ENCODE measurements at regions of chr9 and their contacts with region 1.

Region 1: GRCh38 chr9:12775679-12776512 is 1.1 kb downstream of the LURAP1L start:
- H3K4me3 ChIP-seq: peak overlapping the region; percentile 71
- H3K27ac ChIP-seq: peak overlapping the region; percentile 87
- H3K4me1 ChIP-seq: peaks cover 8% of the 10 kb centered on the region
- CTCF ChIP-seq: peak; percentile 89

Region 2: GRCh38 chr9:12719431-12719830 is 56.5 kb before region 1 on chr9:
- CTCF ChIA-PET with region 1: interaction called, 18 read pairs
- POLR2A ChIA-PET with region 1: interaction called, 3 read pairs
- H3K4me3 ChIP-seq: no peak overlapping the region
- H3K27ac ChIP-seq: no peak overlapping the region
- H3K4me1 ChIP-seq: no peaks in the 10 kb centered on the region
- CTCF ChIP-seq: no peak

Region 3: GRCh38 chr9:12760758-12761157 is 15.1 kb before region 1 on chr9:
- CTCF ChIA-PET with region 1: interaction called, 11 read pairs
- POLR2A ChIA-PET with region 1: no interaction called
- H3K4me3 ChIP-seq: no peak overlapping the region
- H3K27ac ChIP-seq: no peak overlapping the region
- H3K4me1 ChIP-seq: peaks cover 8% of the 10 kb centered on the region; the same call in 1 of the 2 replicates
- CTCF ChIP-seq: no peak

Region 4: GRCh38 chr9:12813960-12814876 is 38.3 kb after region 1 on chr9:
- CTCF ChIA-PET with region 1: interaction called, 8 read pairs
- POLR2A ChIA-PET with region 1: interaction called, 15 read pairs
- H3K4me3 ChIP-seq: peak overlapping the region; percentile 15
- H3K27ac ChIP-seq: peak overlapping the region; percentile 79
- H3K4me1 ChIP-seq: peaks cover 11% of the 10 kb centered on the region
- CTCF ChIP-seq: 0 out of 2 replicates have a peak, but pooled peaks have one; percentile 15

Region 5: GRCh38 chr9:12884737-12885414 is 109.0 kb after region 1 on chr9:
- CTCF ChIA-PET with region 1: interaction called, 20 read pairs
- POLR2A ChIA-PET with region 1: interaction called, 4 read pairs
- H3K4me3 ChIP-seq: no peak overlapping the region
- H3K27ac ChIP-seq: no peak overlapping the region
- H3K4me1 ChIP-seq: peaks cover 9% of the 10 kb centered on the region
- CTCF ChIP-seq: peak; percentile 85

Region 6: DNA sequence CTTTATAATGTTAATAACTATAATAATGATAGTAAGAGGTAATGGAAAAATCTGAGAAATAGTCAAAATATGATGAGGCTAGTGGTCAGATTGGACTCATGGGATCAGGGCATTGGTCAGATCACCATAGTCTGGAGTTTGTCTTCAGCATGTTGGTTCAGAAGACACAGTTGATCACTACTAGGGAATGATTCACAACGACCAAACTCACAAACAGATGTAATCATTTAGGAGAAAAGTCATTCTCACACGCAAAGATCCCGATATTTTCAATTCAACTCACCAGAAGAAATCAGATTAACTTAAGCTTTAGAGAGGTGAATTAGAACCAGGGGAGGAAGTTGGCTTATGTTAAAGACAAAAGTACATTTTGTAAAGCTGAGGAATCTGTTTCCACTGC is 130.8 kb after region 1 on chr9:
- CTCF ChIA-PET with region 1: no interaction called
- POLR2A ChIA-PET with region 1: no interaction called
- H3K4me3 ChIP-seq: no peak overlapping the region
- H3K27ac ChIP-seq: no peak overlapping the region
- H3K4me1 ChIP-seq: no peaks in the 10 kb centered on the region
- CTCF ChIP-seq: no peak

Region 7: DNA sequence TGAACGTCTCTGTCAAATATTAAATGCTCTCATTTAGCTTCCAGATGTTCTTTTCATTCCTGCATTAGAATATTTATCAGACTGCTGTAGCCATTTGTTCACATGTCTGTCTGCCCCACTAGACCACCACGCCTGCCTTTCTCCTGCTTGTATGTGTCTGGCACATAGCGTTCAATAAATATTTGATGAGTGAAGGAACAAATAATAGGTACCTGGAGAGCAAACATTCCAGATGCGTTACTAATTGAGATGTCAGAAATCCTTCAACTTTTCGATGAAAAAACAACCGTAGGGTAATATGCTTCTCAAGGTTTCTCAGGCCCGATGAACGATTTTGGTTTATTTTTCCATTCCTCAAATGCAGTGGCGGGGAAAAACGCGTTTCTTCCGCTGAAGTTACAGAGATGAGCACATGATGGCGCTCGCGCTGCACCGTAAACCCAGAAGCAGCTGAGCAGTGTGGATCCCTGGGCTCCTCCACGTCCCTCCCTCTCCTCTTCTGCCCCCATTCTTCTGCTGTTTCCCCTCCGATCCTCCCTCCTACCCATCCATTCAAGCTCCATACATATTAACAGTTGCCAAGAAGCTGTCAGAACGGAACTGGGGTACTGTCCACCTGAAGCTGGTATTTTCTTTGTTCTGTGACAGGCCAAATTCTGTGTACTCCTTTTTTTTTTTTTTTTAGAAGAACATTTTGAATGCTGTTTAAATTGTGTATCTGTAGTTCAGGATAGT is 258.2 kb after region 1 on chr9:
- CTCF ChIA-PET with region 1: interaction called, 10 read pairs
- POLR2A ChIA-PET with region 1: no interaction called
- H3K4me3 ChIP-seq: no peak overlapping the region; the same call in 1 of the 2 replicates
- H3K27ac ChIP-seq: no peak overlapping the region
- H3K4me1 ChIP-seq: no peaks in the 10 kb centered on the region
- CTCF ChIP-seq: peak; percentile 74

Measured in HEK293 (cell line).